ENCODE measurements at regions of chr17 and their contacts with region 1.

Region 1: DNA sequence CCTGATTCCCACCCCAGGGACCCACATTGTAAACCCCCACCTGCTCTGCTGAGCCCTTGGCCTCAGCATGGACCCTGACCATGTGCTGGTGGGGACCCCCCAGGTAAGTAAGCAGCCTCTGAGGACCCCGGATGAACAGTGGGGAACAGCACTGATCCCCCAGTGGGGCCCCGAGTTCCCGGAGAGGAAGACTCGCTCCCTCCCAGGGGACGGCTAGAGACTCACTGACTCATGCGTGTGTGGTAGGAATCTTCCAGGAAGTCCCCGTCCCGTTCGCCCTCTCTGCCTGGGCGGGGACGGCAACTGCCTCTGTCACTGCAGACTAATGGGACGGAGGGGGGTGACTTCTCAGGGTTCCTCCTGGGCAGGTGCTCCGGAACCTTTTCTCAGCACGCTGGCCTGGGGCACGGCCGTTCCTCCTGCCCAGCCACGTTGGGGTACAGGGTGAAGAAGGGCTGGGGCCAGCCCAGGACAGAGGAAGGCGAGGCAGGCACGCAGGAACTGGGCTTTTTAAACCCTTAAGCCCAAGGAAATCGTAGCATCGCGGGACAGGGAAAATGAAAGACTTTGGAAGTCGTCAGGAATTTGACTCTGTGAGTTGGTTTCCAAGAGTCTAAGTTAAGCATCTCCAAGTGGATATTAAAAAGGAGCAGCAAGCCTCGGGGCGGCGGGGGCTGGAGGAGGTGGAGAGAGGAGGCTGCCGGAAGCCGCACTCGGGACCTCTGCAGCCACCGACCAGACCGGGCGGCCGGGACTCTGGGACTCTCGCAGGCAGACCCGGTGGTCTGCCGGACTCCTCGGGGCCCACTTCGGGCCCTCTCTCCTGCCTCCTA is 178.7 kb downstream of the SEC14L1 start:
- DNase-seq: no peak
- H3K4me3 ChIP-seq: peak overlapping the region; percentile 28 to 67 (median 52)
- H3K27ac ChIP-seq: peak overlapping the region; percentile 89 to 97 (median 93)
- H3K4me1 ChIP-seq: peaks cover 57 to 91% (median 67%) of the 10 kb centered on the region in 3 donors
- H3K27me3 ChIP-seq: no peaks in the 10 kb centered on the region
- CTCF ChIP-seq: no peak
- POLR2A ChIP-seq: peak in 3 of 4 donors; percentile 22 to 80 (median 69)

Region 2: GRCh38 chr17:77153472-77153871 is 166.0 kb before region 1 on chr17:
- intact Hi-C with region 1: no loop called
- DNase-seq: no peak
- H3K4me3 ChIP-seq: no peak overlapping the region
- H3K27ac ChIP-seq: peak overlapping the region in 2 of 4 donors; percentile 20 to 43
- H3K4me1 ChIP-seq: peaks cover 4 to 75% (median 21%) of the 10 kb centered on the region in 3 donors
- H3K27me3 ChIP-seq: no peaks in the 10 kb centered on the region
- CTCF ChIP-seq: no peak
- POLR2A ChIP-seq: no peak

Region 3: DNA sequence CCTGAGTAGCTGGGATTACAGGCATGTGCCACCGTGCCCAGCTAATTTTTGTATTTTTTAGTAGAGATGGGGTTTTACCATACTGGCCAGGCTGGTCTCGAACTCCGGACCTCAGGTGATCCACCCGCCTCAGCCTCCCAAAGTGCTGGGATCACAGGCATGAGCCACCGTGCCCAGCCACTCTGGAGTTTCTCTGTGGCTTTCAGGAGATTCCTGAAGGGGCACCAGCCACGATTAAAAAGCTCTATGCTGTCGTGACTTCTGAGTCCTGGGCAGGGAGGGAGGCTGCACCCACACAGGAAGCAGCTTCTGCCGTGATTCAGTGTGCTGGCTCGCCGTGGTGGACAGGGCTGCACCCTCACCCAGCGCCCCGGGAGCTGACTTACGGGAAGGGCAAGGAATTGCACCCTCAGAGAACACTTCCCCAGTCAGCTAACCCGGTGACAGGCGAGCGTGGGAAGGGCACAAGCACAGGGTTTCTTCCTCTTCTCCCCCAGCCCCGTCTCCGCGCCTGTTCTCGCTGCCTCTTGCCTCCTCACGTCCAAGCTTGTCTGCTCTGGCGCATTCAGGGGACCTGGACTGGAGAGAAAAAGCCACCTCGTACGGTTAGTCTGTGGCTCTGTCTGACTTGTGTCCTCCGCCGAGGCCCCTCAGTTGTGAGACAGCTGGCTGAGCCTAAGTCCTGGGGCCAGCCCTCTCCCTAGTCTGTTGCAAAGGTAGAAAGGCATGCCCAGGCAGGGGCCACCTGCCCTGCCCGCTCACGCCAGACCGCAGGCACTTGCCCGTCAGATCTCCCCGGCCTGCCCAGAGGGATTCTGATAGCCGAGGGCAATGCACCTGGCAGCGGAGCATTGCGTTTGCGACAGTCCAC is 33.7 kb before region 1 on chr17:
- intact Hi-C with region 1: loop called (anchors 5 kb)
- DNase-seq: no peak
- H3K4me3 ChIP-seq: peak overlapping the region in 2 of 4 donors; percentile 2 to 41
- H3K27ac ChIP-seq: peak overlapping the region; percentile 84 to 95 (median 92)
- H3K4me1 ChIP-seq: peaks cover 34 to 90% (median 44%) of the 10 kb centered on the region in 3 donors
- H3K27me3 ChIP-seq: peaks cover 0 to 15% (median 0%) of the 10 kb centered on the region in 4 donors
- CTCF ChIP-seq: no peak
- POLR2A ChIP-seq: peak in 2 of 4 donors; percentile 18 to 41